Activated naive CD4-positive, alpha-beta T cell treated with anti-CD3 and anti-CD28 coated beads for 36 hours (primary cell): ENCODE measurements at regions of chrX and their contacts with region 1.

Region 1: GRCh38 chrX:150486011-150486410 is 82.4 kb upstream of the MTM1 start:
- DNase-seq: peak; percentile 62
- H3K4me3 Mint-ChIP-seq: no peak overlapping the region
- H3K27ac Mint-ChIP-seq: no peak overlapping the region
- H3K4me1 Mint-ChIP-seq: peaks cover 27% of the 10 kb centered on the region
- H3K27me3 Mint-ChIP-seq: no peaks in the 10 kb centered on the region

Region 2: GRCh38 chrX:149711545-149712236 is 774.3 kb before region 1 on chrX and contains the start of gene MAGEA11:
- CTCF ChIA-PET with region 1: no interaction called
- intact Hi-C with region 1: no loop called
- DNase-seq: no peak
- H3K4me3 Mint-ChIP-seq: no peak within 1 kb of the TSS
- H3K27ac Mint-ChIP-seq: no peak within 1 kb of the TSS
- H3K4me1 Mint-ChIP-seq: no peaks in the 10 kb centered on the region
- H3K27me3 Mint-ChIP-seq: no peaks in the 10 kb centered on the region
- total RNA-seq, gene MAGEA11: not detected

Region 3: GRCh38 chrX:149962859-149963757 is 522.9 kb before region 1 on chrX:
- CTCF ChIA-PET with region 1: no interaction called
- intact Hi-C with region 1: loop called (anchors 5 kb)
- DNase-seq: peak; percentile 39
- H3K4me3 Mint-ChIP-seq: no peak overlapping the region
- H3K27ac Mint-ChIP-seq: no peak overlapping the region
- H3K4me1 Mint-ChIP-seq: peaks cover 2% of the 10 kb centered on the region
- H3K27me3 Mint-ChIP-seq: no peaks in the 10 kb centered on the region

Region 4: DNA sequence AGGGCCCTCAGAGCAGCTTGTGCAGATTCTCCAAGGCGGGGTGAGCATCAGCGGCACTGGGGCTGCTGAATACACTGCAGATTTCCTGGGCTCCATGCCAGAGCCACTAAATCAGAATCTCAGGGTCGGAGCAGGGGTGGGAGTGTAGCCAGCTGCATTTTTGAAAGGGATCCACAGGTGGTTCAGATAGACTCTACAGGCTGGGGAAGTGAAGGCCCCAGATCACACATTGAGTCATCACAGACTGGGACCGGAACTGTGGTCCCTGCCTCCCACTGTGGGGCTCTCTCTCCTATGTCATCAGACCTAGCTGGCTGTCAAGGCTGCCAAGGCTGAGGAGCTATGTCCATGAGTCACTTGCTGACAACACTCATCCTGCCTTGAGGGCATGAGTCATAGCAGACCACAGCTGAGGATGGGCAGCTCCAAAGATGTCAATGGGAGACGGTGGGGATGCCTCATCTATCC is 285.2 kb before region 1 on chrX:
- CTCF ChIA-PET with region 1: no interaction called
- intact Hi-C with region 1: loop called (anchors 1 kb)
- DNase-seq: peak; percentile 71
- H3K4me3 Mint-ChIP-seq: no peak overlapping the region
- H3K27ac Mint-ChIP-seq: no peak overlapping the region
- H3K4me1 Mint-ChIP-seq: peaks cover 5% of the 10 kb centered on the region
- H3K27me3 Mint-ChIP-seq: no peaks in the 10 kb centered on the region

Region 5: DNA sequence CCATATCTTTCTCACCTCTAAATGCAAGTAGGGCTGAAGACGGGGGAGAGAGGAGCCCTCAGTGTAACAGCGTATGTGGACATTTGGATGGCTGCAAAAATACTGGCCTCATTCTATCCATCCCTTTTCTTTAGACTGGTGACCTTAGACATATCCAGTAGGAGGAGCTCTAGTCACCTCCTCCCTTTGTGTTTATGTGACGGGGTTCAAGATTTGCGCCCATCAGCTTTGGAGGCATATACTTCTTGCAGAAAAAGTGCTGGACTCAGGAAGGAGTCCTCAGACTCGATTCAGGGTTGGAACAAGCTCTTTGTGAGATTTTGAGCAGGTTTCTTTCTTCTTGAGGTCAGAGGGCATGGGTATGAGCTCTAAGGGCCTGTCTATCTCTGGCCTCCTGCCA is 36.7 kb before region 1 on chrX:
- CTCF ChIA-PET with region 1: interaction called, 8 read pairs
- intact Hi-C with region 1: loop called (anchors 1 kb)
- DNase-seq: no peak
- H3K4me3 Mint-ChIP-seq: no peak overlapping the region
- H3K27ac Mint-ChIP-seq: no peak overlapping the region
- H3K4me1 Mint-ChIP-seq: peaks cover 13% of the 10 kb centered on the region
- H3K27me3 Mint-ChIP-seq: no peaks in the 10 kb centered on the region